ENCODE measurements at regions of chr21 and their contacts with region 1.

Region 1: DNA sequence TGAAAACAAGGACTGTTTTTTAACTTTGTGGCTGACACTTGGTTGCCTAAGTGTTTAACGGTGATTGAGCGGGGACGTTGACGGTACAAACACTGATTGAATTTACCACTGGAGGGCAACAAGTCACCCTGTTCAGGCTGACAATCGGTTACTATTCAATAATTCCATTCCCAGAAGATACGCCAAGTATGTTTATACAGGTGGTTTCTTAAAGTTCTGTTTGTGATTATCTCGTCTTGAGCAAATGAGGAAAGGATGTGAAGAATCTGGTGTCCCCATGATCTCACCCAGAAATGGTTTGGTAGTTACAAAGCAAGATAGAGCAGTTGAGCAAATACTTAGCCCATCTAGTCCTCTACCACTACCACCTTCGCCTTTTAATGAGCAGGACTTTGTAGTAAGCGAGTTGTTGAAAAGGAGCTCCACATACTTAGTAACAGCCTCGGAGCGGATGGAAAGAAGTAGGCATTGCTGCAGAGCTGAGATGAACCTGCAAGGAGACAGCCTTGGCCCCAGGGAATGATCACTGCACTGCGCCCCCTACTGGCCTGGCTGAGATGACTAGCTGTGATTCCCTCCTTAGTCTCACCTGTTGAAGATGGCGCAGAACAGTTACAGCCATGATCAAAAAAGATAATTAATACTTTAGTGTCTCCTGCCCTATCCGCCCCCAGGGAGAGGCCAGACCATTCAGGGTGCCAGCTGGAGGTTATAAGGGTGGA is 36.3 kb downstream of the IFNAR1 start:
- DNase-seq: peak; percentile 94
- ATAC-seq: peak; percentile 88
- H3K4me3 Mint-ChIP-seq: peak overlapping the region; percentile 72
- H3K27ac Mint-ChIP-seq: peak overlapping the region; percentile 75
- H3K4me1 Mint-ChIP-seq: peaks cover 16% of the 10 kb centered on the region
- H3K27me3 Mint-ChIP-seq: no peaks in the 10 kb centered on the region

Region 2: GRCh38 chr21:33266050-33266788 is 94.8 kb before region 1 on chr21 and contains the start of gene IL10RB:
- CTCF ChIA-PET with region 1: interaction called, 5 read pairs
- POLR2A ChIA-PET with region 1: no interaction called
- intact Hi-C with region 1: loop called in 1 of 2 experiments (anchors 5 kb)
- DNase-seq: peak; percentile 84
- ATAC-seq: peak; percentile 64
- H3K4me3 Mint-ChIP-seq: peak within 1 kb of the TSS; percentile 90
- H3K27ac Mint-ChIP-seq: peak within 1 kb of the TSS; percentile 92
- H3K4me1 Mint-ChIP-seq: peaks cover 42% of the 10 kb centered on the region
- H3K27me3 Mint-ChIP-seq: no peaks in the 10 kb centered on the region
- total RNA-seq, gene IL10RB: 22.8 to 25.0 TPM

Region 3: DNA sequence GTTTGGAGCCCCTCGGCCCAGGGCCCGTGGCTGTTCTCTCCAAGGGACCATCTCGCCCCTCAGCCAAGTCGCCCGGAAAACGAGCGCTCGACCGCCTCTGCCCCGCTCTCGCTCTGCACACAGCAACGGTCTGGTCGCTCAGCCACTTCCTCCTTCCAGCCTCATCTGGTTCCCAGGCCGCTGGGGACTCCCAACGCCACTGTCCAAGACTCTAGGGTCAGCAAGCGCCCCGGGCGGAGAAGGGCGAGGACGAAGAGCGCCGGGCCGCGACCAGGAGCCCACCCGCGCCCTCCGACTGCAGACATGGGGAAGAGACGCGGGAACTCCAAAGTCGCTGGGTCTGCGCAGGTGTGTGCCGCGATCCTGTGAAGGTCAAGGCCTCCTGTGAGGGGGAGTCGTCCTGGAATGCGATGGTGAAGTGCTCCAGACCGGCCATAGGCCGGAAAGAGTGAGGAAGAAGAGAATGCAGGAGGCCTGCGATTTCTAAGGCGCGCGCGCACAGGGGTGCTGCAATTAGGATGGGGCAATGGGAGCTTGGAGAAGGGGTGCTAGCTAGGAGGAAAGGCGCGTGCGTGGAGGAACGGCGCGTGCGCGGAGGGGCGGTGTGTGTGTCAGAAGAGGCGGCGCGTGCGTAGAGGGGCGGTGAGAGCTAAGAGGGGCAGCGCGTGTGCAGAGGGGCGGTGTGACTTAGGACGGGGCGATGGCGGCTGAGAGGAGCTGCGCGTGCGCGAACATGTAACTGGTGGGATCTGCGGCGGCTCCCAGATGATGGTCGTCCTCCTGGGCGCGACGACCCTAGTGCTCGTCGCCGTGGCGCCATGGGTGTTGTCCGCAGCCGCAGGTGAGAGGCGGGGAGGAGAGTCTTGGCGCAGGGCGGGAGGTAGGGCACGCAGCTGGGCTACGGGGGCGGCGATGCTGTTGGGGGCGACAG is 36.5 kb before region 1 on chr21 and contains the start of gene IFNAR1:
- CTCF ChIA-PET with region 1: interaction called, 19 read pairs
- POLR2A ChIA-PET with region 1: interaction called, 12 read pairs
- intact Hi-C with region 1: loop called in 1 of 2 experiments (anchors 1 kb)
- DNase-seq: peak; percentile 100
- ATAC-seq: peak; percentile 95
- H3K4me3 Mint-ChIP-seq: no peak within 1 kb of the TSS
- H3K27ac Mint-ChIP-seq: no peak within 1 kb of the TSS
- H3K4me1 Mint-ChIP-seq: peaks cover 31% of the 10 kb centered on the region
- H3K27me3 Mint-ChIP-seq: no peaks in the 10 kb centered on the region
- total RNA-seq, gene IFNAR1: 21.8 to 29.6 TPM

Region 4: DNA sequence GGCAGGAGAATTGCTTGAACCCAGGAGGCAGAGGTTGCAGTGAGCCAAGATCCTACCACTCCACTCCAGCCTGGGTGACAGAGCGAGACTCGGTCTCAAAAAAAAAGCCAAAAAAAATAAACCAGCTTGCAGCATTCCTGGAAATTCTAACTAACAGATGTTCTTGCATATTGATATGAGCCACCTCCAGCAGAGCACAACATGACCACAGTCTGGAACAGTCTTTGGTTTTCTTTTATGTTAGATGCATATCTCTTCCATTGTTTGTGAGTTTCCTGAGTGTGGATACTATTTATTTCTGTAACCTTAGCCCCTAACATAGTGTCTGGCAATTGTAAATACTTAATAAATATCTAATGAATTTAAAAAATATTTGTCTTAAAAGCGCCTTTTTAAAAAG is 12.3 kb before region 1 on chr21:
- CTCF ChIA-PET with region 1: interaction called, 56 read pairs
- POLR2A ChIA-PET with region 1: no interaction called
- intact Hi-C with region 1: no loop called
- DNase-seq: no peak
- ATAC-seq: no peak
- H3K4me3 Mint-ChIP-seq: no peak overlapping the region
- H3K27ac Mint-ChIP-seq: no peak overlapping the region
- H3K4me1 Mint-ChIP-seq: peaks cover 8% of the 10 kb centered on the region
- H3K27me3 Mint-ChIP-seq: no peaks in the 10 kb centered on the region

Region 5: GRCh38 chr21:33386222-33386784 is 25.3 kb after region 1 on chr21:
- CTCF ChIA-PET with region 1: interaction called, 24 read pairs
- POLR2A ChIA-PET with region 1: interaction called, 7 read pairs
- intact Hi-C with region 1: no loop called
- DNase-seq: no peak
- ATAC-seq: no peak
- H3K4me3 Mint-ChIP-seq: no peak overlapping the region
- H3K27ac Mint-ChIP-seq: no peak overlapping the region
- H3K4me1 Mint-ChIP-seq: peaks cover 42% of the 10 kb centered on the region
- H3K27me3 Mint-ChIP-seq: peaks cover 7% of the 10 kb centered on the region

Region 6: GRCh38 chr21:33479679-33480480 is 118.8 kb after region 1 on chr21 and contains the start of gene TMEM50B:
- CTCF ChIA-PET with region 1: interaction called, 3 read pairs
- POLR2A ChIA-PET with region 1: interaction called, 3 read pairs
- intact Hi-C with region 1: loop called in 1 of 2 experiments (anchors 1 kb)
- DNase-seq: peak; percentile 99
- ATAC-seq: peak; percentile 97
- H3K4me3 Mint-ChIP-seq: peak within 1 kb of the TSS; percentile 83
- H3K27ac Mint-ChIP-seq: peak within 1 kb of the TSS; percentile 88
- H3K4me1 Mint-ChIP-seq: peaks cover 17% of the 10 kb centered on the region
- H3K27me3 Mint-ChIP-seq: no peaks in the 10 kb centered on the region
- total RNA-seq, gene TMEM50B: 13.6 to 15.2 TPM

Measured in activated CD4-positive, alpha-beta T cell treated with anti-CD3 and anti-CD28 coated beads for 36 hours (primary cell).